ENCODE measurements at regions of chr5 and their contacts with region 1.

Region 1: GRCh38 chr5:157328277-157328912 is 62.5 kb downstream of the CYFIP2 start:
- DNase-seq: peak in 4 of 5 donors; percentile 59 to 68 (median 60)
- ATAC-seq: peak; percentile 86 to 97 (median 94)
- H3K4me3 ChIP-seq: peak overlapping the region in 9 of 12 donors; percentile 4 to 37 (median 12)
- H3K27ac ChIP-seq: peak overlapping the region in 1 of 12 donors; percentile 24
- H3K4me1 ChIP-seq: peaks cover 0 to 13% (median 0%) of the 10 kb centered on the region in 12 donors
- H3K27me3 ChIP-seq: no peaks in the 10 kb centered on the region
- CTCF ChIP-seq: peak; percentile 80 to 94 (median 90)
- POLR2A ChIP-seq: no peak

Region 2: DNA sequence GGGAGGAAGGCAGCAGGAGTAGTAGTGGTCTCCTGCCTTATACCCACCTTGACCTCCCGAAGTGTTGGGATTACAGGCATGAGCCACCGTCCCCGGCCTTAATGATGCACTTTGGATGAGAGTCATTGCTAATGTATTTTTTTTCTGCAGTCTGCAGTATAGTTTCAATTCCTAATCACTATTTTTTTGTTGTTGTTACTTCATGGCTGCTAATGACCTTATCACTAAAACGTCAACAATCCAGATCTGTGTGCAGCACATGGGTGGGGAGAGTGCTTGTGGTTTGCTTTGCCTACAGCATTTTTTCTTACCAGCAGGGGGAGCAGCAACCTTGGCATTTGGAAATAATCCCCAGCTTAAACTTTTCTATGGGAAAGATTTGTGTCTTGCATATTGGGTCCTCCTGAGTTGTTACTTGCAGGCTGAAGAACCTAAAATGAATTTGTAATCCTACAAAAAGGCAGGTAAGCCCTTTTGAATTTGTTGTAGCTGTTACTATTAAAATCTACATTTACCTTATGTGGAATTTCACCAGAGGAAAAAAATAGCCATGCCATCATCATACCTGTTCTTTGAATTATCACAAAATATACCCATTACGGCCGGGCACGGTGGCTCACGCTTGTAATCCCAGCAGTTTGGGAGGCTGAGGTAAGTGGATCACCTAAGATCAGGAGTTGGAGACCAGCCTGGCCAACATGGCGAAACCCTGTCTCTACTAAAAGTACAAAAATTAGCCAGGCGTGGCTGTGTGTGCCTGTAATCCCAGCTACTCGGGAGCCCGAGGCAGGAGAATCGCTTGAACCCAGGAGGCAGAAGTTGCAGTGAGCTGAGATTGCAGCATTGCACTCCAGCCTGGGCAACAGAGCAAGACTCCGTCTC is 179.4 kb before region 1 on chr5:
- intact Hi-C with region 1: loop called in 1 of 10 experiments (anchors 5 kb)
- DNase-seq: peak in 3 of 5 donors; percentile 46 to 62 (median 48)
- ATAC-seq: peak in 3 of 4 donors; percentile 71 to 79 (median 74)
- H3K4me3 ChIP-seq: no peak overlapping the region
- H3K27ac ChIP-seq: no peak overlapping the region
- H3K4me1 ChIP-seq: peaks cover 0 to 13% (median 3%) of the 10 kb centered on the region in 12 donors
- H3K27me3 ChIP-seq: no peaks in the 10 kb centered on the region
- CTCF ChIP-seq: peak; percentile 72 to 95 (median 87)
- POLR2A ChIP-seq: no peak

Region 3: GRCh38 chr5:157471709-157472108 is 143.3 kb after region 1 on chr5:
- intact Hi-C with region 1: loop called (anchors 2 to 5 kb)
- DNase-seq: no peak
- ATAC-seq: peak in 1 of 4 donors; percentile 10
- H3K4me3 ChIP-seq: no peak overlapping the region
- H3K27ac ChIP-seq: no peak overlapping the region
- H3K4me1 ChIP-seq: peaks cover 0 to 31% (median 15%) of the 10 kb centered on the region in 12 donors
- H3K27me3 ChIP-seq: no peaks in the 10 kb centered on the region
- CTCF ChIP-seq: peak in 11 of 12 donors; percentile 25 to 60 (median 41)
- POLR2A ChIP-seq: no peak

Region 4: DNA sequence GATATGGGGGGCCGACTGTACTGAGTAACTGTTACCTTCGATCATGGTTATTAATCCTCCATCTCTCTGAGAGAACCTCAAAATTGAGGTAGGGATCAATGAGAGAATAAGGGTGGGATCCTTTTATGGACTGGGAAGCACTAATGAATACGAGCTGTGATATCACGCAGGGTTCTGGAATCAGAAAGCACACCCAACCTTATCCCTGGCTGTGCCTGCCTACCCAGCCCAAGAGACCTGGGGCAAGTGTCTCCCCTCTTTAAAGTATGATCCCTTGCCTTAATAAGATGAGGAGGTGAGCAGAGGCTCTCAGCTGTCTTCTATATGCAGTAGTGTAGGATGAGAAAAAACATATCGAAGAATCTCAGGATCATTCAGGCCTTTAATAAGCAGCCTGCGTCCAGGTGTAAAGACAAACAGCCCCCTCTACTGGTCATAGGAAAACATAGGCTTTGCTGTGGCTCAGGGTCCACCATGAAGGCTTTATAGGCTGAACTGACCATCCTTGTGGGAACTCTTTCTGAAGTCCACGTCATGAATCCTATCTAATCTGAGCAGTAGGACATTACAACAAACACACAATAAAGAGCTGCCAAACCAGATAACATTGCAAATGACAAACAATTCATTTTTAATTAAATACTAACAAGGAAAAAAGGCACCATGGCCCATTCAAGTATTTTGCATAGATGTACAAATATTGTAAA is 148.5 kb after region 1 on chr5:
- intact Hi-C with region 1: loop called (anchors 2 to 5 kb)
- DNase-seq: no peak
- ATAC-seq: peak in 3 of 4 donors; percentile 35 to 72 (median 38)
- H3K4me3 ChIP-seq: no peak overlapping the region
- H3K27ac ChIP-seq: peak overlapping the region in 1 of 12 donors; percentile 77
- H3K4me1 ChIP-seq: peaks cover 0 to 34% (median 13%) of the 10 kb centered on the region in 12 donors
- H3K27me3 ChIP-seq: no peaks in the 10 kb centered on the region
- CTCF ChIP-seq: peak; percentile 58 to 76 (median 66)
- POLR2A ChIP-seq: no peak